ENCODE measurements at regions of chr2 and their contacts with region 1.

Region 1: DNA sequence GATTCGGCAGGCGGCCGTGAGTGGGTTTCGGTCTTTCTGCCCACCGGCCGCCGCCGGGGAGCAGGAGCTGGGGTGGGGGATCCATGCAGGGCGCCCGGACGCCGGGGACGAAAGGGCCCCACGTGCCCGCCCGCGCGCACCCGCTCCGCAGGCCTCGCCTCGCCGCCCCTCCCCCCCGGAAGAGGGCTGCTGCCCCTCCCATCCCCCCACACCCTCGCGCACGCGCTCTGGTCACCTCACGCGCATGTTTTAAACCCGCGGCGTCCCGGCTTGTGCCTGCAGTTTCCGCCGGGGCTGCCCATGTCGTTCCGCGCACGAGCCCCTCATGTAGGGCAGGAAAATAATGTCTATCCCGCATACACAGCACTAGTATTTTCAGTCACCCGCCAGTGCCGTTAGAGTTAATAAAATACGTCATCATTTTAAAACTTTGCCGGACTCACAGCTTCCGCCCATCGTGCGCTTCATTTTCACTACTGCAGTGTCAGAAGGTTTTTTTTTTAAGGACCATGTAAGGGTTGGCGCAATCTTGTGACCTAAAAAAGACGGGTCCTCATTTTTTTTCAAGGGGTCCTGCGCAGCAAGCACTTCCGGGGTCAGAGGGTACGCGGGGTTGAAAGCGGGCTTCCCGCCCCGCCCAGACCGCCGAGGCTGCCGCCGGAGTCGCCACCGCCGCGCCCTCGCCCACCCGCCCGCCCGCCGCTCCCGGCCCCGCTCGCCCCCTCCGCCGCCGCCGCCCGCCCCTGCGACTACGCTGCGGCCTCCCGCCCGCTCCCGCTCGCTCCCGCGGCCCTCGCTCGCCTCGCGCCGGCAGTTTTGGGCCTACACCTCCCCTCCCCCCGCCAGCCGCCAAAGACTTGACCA is at the start of gene PCBP1:
- DNase-seq: peak; percentile 73 to 95
- H3K4me3 ChIP-seq: peak within 1 kb of the TSS; percentile 83 to 99 (median 98)
- H3K27ac ChIP-seq: peak within 1 kb of the TSS; percentile 100
- H3K4me1 ChIP-seq: peaks cover 6 to 18% (median 15%) of the 10 kb centered on the region in 4 experiments; a peak in 5 of 7 replicates
- H3K27me3 ChIP-seq: no peaks in the 10 kb centered on the region
- CTCF ChIP-seq: no peak
- EP300 ChIP-seq: peak in 1 of 2 experiments; percentile 8; a peak in 1 of 3 replicates
- POLR2A ChIP-seq: peak; percentile 90 to 95
- RAD21 ChIP-seq: 0 out of 4 replicates have a peak, but pooled peaks of 1 of the 2 experiments have one; percentile 8
- total RNA-seq, gene PCBP1: 493 and 511 TPM in 2 replicates

Region 2: GRCh38 chr2:69893684-69894551 is 193.2 kb before region 1 on chr2 and contains the start of gene SNRNP27:
- CTCF ChIA-PET with region 1: no interaction called
- POLR2A ChIA-PET with region 1: interaction called, 11 read pairs
- DNase-seq: peak in 1 of 2 experiments; percentile 85
- H3K4me3 ChIP-seq: peak within 1 kb of the TSS; percentile 88 to 94 (median 91)
- H3K27ac ChIP-seq: peak within 1 kb of the TSS; percentile 72
- H3K4me1 ChIP-seq: no peaks in the 10 kb centered on the region
- H3K27me3 ChIP-seq: no peaks in the 10 kb centered on the region
- CTCF ChIP-seq: no peak
- EP300 ChIP-seq: no peak
- POLR2A ChIP-seq: peak in 1 of 2 experiments; percentile 73; a peak in 1 of 3 replicates
- RAD21 ChIP-seq: no peak; a peak in 1 of 4 replicates
- total RNA-seq, gene SNRNP27: 40.5 and 40.9 TPM in 2 replicates

Region 3: GRCh38 chr2:69990776-69991175 is 96.3 kb before region 1 on chr2:
- CTCF ChIA-PET with region 1: no interaction called
- POLR2A ChIA-PET with region 1: no interaction called
- DNase-seq: no peak
- H3K4me3 ChIP-seq: no peak overlapping the region
- H3K27ac ChIP-seq: no peak overlapping the region; the same call in 1 of the 2 replicates
- H3K4me1 ChIP-seq: peaks cover 0 to 3% (median 0%) of the 10 kb centered on the region in 4 experiments; a peak in 2 of 7 replicates
- H3K27me3 ChIP-seq: no peaks in the 10 kb centered on the region; a peak in 1 of 7 replicates
- CTCF ChIP-seq: no peak
- EP300 ChIP-seq: no peak
- POLR2A ChIP-seq: no peak
- RAD21 ChIP-seq: no peak

Region 4: GRCh38 chr2:70070541-70071268 is 16.4 kb before region 1 on chr2:
- CTCF ChIA-PET with region 1: interaction called, 85 read pairs
- POLR2A ChIA-PET with region 1: interaction called, 184 read pairs
- DNase-seq: no peak
- H3K4me3 ChIP-seq: no peak overlapping the region
- H3K27ac ChIP-seq: no peak overlapping the region
- H3K4me1 ChIP-seq: no peaks in the 10 kb centered on the region
- H3K27me3 ChIP-seq: no peaks in the 10 kb centered on the region
- CTCF ChIP-seq: peak; percentile 43 to 88 (median 77)
- EP300 ChIP-seq: no peak
- POLR2A ChIP-seq: 0 out of 3 replicates have a peak, but pooled peaks of 1 of the 2 experiments have one; percentile 27
- RAD21 ChIP-seq: peak; percentile 77 to 87

Region 5: GRCh38 chr2:70142590-70143313 is 55.7 kb after region 1 on chr2:
- CTCF ChIA-PET with region 1: interaction called, 25 read pairs
- POLR2A ChIA-PET with region 1: interaction called, 1,553 read pairs
- DNase-seq: peak; percentile 99
- H3K4me3 ChIP-seq: peak overlapping the region in 2 of 4 experiments; percentile 4 to 64; a peak in 5 of 8 replicates
- H3K27ac ChIP-seq: peak overlapping the region; percentile 70; the same call in 1 of the 2 replicates
- H3K4me1 ChIP-seq: peaks cover 19 to 26% (median 20%) of the 10 kb centered on the region in 4 experiments
- H3K27me3 ChIP-seq: no peaks in the 10 kb centered on the region
- CTCF ChIP-seq: peak; percentile 93 to 96 (median 94)
- EP300 ChIP-seq: peak; percentile 12 to 96
- POLR2A ChIP-seq: peak in 1 of 2 experiments; percentile 42; a peak in 1 of 3 replicates
- RAD21 ChIP-seq: peak; percentile 95 to 99

Region 6: DNA sequence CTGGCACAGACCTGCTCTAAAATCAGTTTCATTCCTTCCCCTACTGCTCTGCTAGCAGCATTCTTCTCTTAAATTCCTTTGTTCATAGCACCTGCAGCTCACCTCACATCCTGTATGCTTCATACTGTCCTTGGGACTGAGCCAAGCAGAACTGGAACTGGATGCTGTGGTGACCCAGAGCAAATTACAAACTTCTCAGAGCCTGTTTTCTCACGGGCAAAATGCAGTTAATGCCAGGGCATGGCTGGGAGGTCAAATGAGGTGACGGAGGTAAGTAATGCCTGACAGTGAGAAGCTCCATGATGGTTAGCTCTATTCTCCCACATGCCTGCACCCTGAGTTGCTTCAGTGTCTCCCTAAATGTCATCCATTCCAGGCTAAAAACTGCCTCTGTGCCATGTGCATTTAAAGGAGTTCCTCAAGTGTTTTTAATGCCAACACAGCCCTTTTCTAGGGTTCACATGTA is 74.0 kb after region 1 on chr2:
- CTCF ChIA-PET with region 1: no interaction called
- POLR2A ChIA-PET with region 1: no interaction called
- DNase-seq: no peak
- H3K4me3 ChIP-seq: no peak overlapping the region
- H3K27ac ChIP-seq: no peak overlapping the region
- H3K4me1 ChIP-seq: no peaks in the 10 kb centered on the region
- H3K27me3 ChIP-seq: no peaks in the 10 kb centered on the region
- CTCF ChIP-seq: no peak
- EP300 ChIP-seq: no peak
- POLR2A ChIP-seq: no peak
- RAD21 ChIP-seq: no peak

Region 7: DNA sequence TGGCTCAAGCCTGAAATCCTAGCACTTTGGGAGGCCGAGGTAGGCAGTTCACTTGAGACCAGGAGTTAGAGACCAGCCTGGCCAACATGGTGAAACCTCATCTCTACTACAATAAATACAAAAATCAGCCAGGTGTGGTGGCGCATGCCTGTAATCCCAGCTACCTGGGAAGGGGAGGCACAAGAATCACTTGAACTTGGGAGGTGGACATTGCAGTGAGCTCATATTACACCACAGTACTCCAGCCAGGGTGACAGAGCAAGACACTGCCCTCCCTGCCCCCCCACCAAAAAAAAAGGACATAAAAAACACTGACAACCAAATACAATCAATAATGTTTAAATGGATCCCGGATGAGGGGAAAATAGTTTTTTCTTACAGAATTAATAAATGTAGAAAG is 153.5 kb after region 1 on chr2:
- CTCF ChIA-PET with region 1: no interaction called
- POLR2A ChIA-PET with region 1: no interaction called
- DNase-seq: no peak
- H3K4me3 ChIP-seq: no peak overlapping the region
- H3K27ac ChIP-seq: no peak overlapping the region
- H3K4me1 ChIP-seq: peaks cover 0 to 9% (median 6%) of the 10 kb centered on the region in 4 experiments; a peak in 5 of 7 replicates
- H3K27me3 ChIP-seq: no peaks in the 10 kb centered on the region
- CTCF ChIP-seq: no peak
- EP300 ChIP-seq: no peak
- POLR2A ChIP-seq: no peak
- RAD21 ChIP-seq: no peak

Region 8: GRCh38 chr2:70258532-70258874 is 171.4 kb after region 1 on chr2:
- CTCF ChIA-PET with region 1: no interaction called
- POLR2A ChIA-PET with region 1: interaction called, 12 read pairs
- DNase-seq: peak in 1 of 2 experiments; percentile 63
- H3K4me3 ChIP-seq: peak overlapping the region; percentile 76 to 87 (median 78)
- H3K27ac ChIP-seq: no peak overlapping the region
- H3K4me1 ChIP-seq: peaks cover 0 to 8% (median 3%) of the 10 kb centered on the region in 4 experiments; a peak in 5 of 7 replicates
- H3K27me3 ChIP-seq: no peaks in the 10 kb centered on the region
- CTCF ChIP-seq: no peak
- EP300 ChIP-seq: no peak
- POLR2A ChIP-seq: no peak
- RAD21 ChIP-seq: no peak

Measured in H1 (cell line).